ENCODE measurements at regions of chr1 and their contacts with region 1.

Region 1: GRCh38 chr1:168065506-168065905 is 71.2 kb downstream of the GPR161 start:
- DNase-seq: no peak
- ATAC-seq: no peak
- H3K4me3 ChIP-seq: no peak overlapping the region
- H3K27ac ChIP-seq: no peak overlapping the region
- H3K4me1 ChIP-seq: no peaks in the 10 kb centered on the region
- H3K27me3 ChIP-seq: no peaks in the 10 kb centered on the region
- CTCF ChIP-seq: no peak

Region 2: DNA sequence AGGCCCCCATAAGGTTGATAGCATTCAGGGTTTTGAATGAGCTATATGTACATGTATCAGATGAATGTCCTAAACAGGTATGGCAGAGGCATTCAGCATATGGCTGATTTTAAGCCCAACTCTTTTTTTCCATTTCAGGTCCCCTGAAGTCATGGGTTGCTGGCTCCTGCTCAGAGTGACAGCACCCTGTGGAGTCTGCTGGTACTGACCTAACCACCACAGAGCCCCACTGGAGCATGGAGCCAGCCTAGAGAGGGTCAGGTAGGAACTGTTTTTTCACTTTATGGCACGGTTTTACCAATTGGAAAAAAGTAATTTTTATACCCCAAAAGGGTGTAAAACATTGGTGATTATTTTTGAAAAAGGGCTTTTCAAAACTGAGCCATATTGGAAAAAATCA is 46.1 kb before region 1 on chr1:
- CTCF ChIA-PET with region 1: no interaction called
- POLR2A ChIA-PET with region 1: no interaction called
- intact Hi-C with region 1: no loop called
- DNase-seq: no peak
- ATAC-seq: peak; percentile 48; the same call in 1 of the 2 replicates
- H3K4me3 ChIP-seq: no peak overlapping the region
- H3K27ac ChIP-seq: no peak overlapping the region
- H3K4me1 ChIP-seq: no peaks in the 10 kb centered on the region; the same call in 1 of the 2 replicates
- H3K27me3 ChIP-seq: no peaks in the 10 kb centered on the region
- CTCF ChIP-seq: no peak

Region 3: GRCh38 chr1:168088511-168089325 is 23.2 kb after region 1 on chr1:
- CTCF ChIA-PET with region 1: no interaction called
- POLR2A ChIA-PET with region 1: no interaction called
- intact Hi-C with region 1: loop called (anchors 1 kb)
- DNase-seq: peak; percentile 77
- ATAC-seq: peak; percentile 83
- H3K4me3 ChIP-seq: no peak overlapping the region
- H3K27ac ChIP-seq: peak overlapping the region; percentile 42
- H3K4me1 ChIP-seq: peaks cover 17% of the 10 kb centered on the region
- H3K27me3 ChIP-seq: no peaks in the 10 kb centered on the region
- CTCF ChIP-seq: no peak